Right cardiac atrium (tissue), 5 donors: ENCODE measurements at regions of chr2 and their contacts with region 1.

Region 1: DNA sequence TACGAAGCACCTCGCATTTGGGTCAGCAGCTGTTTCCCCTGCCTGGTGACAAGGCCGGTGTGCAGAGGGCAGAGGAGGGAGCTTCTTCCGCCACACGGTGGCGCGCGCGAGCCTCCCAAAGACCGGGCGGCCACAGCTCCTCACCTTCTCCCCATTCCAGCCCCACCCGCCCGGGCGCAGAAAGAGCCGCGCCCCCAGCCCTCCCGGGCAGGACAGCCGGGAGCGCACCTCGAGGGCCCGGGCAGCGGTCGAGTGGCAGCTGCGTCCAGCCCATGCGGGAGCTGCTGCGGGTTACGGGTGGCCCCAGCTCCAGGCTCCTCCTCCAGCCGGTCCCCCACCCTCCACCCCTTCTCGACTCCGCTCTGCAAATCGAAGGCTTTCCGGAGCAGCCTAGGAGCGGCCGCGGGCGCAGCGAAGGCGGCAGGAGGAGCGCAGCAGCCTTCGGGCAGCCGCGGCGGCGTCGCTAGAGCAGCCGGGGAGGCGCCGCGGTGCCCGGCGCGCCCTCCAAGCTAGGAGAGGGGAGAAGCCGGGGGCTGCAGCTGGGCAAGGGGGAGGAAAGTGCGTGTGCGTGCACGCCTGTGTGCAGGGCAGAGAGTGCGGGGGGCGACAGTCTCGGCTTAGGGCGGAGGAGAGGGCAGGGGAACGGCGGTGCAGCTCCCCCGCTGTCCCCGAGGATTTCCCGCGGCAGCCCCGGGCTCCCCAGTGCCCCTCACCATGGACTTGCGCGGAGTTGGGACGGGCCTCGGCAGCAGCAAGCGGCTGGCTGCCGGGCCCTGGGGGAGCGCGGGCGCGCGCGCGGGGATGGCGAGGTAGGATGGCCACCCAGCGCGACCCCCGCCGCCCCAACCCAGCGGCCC is at the start of gene CCDC85A:
- DNase-seq: peak; percentile 86 to 95 (median 94)
- ATAC-seq: peak; percentile 96
- H3K4me3 ChIP-seq: peak within 1 kb of the TSS; percentile 86
- H3K27ac ChIP-seq: peak within 1 kb of the TSS; percentile 21
- H3K4me1 ChIP-seq: no peaks in the 10 kb centered on the region
- H3K27me3 ChIP-seq: no peaks in the 10 kb centered on the region
- total RNA-seq, gene CCDC85A: 1.7 to 3.4 (median 1.9) TPM

Region 2: GRCh38 chr2:56749152-56749752 is 565.4 kb after region 1 on chr2:
- intact Hi-C with region 1: loop called in 3 of 4 experiments (anchors 5 kb)
- DNase-seq: no peak
- ATAC-seq: no peak
- H3K4me3 ChIP-seq: no peak overlapping the region
- H3K27ac ChIP-seq: no peak overlapping the region
- H3K4me1 ChIP-seq: no peaks in the 10 kb centered on the region
- H3K27me3 ChIP-seq: no peaks in the 10 kb centered on the region

Region 3: DNA sequence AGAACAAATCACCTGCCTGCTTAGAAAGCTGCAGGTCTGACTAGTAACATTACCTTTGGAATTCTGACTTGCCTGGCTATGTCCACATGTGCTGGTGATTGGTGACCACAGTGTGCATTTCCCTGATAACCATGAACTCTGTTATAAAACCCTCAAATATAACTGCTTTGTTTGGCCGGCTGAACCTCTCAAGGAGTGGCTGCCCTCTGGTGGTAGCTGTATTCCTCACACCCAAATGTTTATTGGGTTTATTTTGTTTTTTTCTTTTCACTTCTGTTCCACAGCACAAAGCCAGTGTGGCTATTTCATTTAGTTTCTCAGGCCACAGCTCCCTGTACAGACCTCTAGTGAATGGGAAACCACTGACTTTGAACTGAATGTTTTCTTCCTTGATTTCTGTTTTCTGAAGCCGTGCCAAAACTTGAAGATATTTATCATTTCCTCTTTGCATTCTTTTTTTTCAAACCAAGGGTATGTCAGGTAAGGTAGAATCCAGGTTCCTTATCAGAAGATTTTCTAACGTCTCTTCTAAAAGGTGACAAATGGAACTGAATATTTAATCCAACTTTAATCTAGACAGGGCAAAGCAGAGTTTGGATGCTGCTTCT is 1313.7 kb after region 1 on chr2:
- intact Hi-C with region 1: loop called in 3 of 4 experiments (anchors 5 to 10 kb)
- DNase-seq: peak in 2 of 3 donors; percentile 16 to 40
- ATAC-seq: peak in 1 of 2 donors; percentile 33
- H3K4me3 ChIP-seq: no peak overlapping the region
- H3K27ac ChIP-seq: no peak overlapping the region
- H3K4me1 ChIP-seq: no peaks in the 10 kb centered on the region
- H3K27me3 ChIP-seq: no peaks in the 10 kb centered on the region